T-cell (primary cell): ENCODE measurements at regions of chr1 and their contacts with region 1.

Region 1: GRCh38 chr1:184892116-184892515 is 82.2 kb downstream of the NIBAN1 start:
- DNase-seq: peak in 2 of 35 experiments; percentile 8 to 45
- ATAC-seq: peak; percentile 22 to 66 (median 46)
- H3K4me3 ChIP-seq: no peak overlapping the region
- H3K4me3 Mint-ChIP-seq: peak overlapping the region in 1 of 3 donors; percentile 10
- H3K27ac ChIP-seq: peak overlapping the region; percentile 87
- H3K27ac Mint-ChIP-seq: peak overlapping the region; percentile 78 to 79
- H3K4me1 ChIP-seq: peaks cover 0 to 17% of the 10 kb centered on the region in 2 experiments
- H3K4me1 Mint-ChIP-seq: peaks cover 10 to 61% (median 48%) of the 10 kb centered on the region in 3 donors
- H3K27me3 ChIP-seq: no peaks in the 10 kb centered on the region
- H3K27me3 Mint-ChIP-seq: no peaks in the 10 kb centered on the region

Region 2: DNA sequence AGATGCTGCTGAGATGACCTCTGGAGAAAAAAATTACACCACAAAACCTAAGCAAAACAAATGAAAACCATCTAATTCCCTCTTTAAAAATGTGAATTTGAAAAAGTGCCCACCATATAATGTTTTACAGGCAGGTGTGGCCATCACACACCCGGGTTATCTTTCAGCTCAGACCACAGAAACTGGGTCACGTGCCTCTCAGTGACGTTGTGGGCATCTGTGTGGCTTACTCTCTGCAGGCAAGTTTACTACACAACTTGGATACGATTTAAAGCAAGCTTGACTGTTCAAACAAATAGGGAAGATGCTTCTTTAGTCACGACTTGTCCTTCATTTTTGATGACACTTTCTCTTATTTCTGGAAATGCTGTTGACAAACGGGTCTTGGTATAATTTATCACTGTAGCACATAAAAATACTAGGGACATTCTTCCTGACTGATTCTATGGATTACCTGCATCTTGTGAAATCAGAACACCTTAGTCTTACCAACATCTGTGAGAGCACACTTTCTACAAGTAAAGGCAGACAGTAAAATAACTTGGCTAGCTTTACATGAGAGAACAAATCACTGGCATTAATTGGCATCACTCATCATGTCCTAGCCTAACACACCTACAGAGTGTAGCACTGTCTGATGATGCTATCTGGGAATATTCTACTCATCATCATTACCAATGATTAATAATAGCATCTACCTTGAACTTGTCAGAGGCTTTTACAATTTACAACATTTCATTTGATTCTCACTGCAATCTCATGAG is 48.2 kb before region 1 on chr1:
- CTCF ChIA-PET with region 1: interaction called in 1 of 2 experiments, 5 read pairs
- POLR2A ChIA-PET with region 1: interaction called in 1 of 2 experiments, 23 read pairs
- DNase-seq: peak; percentile 14 to 84 (median 61)
- ATAC-seq: peak; percentile 44 to 77 (median 68)
- H3K4me3 ChIP-seq: no peak overlapping the region
- H3K4me3 Mint-ChIP-seq: no peak overlapping the region
- H3K27ac ChIP-seq: peak overlapping the region; percentile 61
- H3K27ac Mint-ChIP-seq: peak overlapping the region; percentile 23 to 81
- H3K4me1 ChIP-seq: peaks cover 0 to 16% of the 10 kb centered on the region in 2 experiments
- H3K4me1 Mint-ChIP-seq: peaks cover 23 to 44% (median 43%) of the 10 kb centered on the region in 3 donors
- H3K27me3 ChIP-seq: no peaks in the 10 kb centered on the region
- H3K27me3 Mint-ChIP-seq: no peaks in the 10 kb centered on the region

Region 3: DNA sequence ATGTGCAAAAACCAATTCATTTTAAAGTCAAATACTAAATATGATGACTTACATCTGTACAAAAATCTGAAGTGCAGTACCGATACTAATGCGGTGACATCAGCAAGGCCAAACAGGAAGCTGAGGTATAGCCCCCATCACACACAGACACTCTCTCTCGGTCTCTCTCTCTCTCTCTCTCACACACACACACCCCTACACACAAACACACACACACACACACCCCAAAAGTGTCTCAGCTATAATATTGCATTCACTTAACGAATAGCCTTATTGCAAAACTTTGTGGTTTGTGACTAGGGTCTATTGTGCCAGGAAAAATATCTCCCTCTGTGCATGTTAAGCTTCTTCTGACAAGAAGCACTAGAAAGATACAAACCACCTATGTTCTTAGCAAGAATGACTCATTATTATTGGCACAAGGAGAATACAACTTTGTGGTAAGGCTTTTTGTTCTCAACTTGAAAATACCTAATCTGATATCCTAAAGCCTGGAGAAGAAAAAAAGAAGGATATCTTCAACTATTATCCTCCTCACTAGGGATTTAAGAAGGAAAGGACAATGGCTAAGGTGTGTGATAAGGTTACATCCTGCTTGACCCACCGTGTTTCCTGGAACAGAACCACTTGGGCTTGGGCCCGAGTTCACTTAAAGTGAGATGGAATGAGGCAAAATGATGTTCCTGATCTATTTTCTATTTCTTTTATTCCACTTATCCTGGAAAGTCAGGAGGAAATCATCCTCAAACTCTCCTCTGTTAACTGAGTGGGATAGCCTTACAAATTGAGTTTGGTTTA is 24.9 kb before region 1 on chr1:
- CTCF ChIA-PET with region 1: interaction called, 6 to 10 read pairs
- POLR2A ChIA-PET with region 1: interaction called in 1 of 2 experiments, 6 read pairs
- DNase-seq: peak; percentile 5 to 78 (median 45)
- ATAC-seq: peak; percentile 85 to 89 (median 88)
- H3K4me3 ChIP-seq: no peak overlapping the region
- H3K4me3 Mint-ChIP-seq: peak overlapping the region; percentile 21 to 65 (median 22)
- H3K27ac ChIP-seq: peak overlapping the region; percentile 86
- H3K27ac Mint-ChIP-seq: peak overlapping the region; percentile 86 to 91
- H3K4me1 ChIP-seq: peaks cover 0 to 9% of the 10 kb centered on the region in 2 experiments
- H3K4me1 Mint-ChIP-seq: peaks cover 26 to 50% (median 50%) of the 10 kb centered on the region in 3 donors
- H3K27me3 ChIP-seq: no peaks in the 10 kb centered on the region
- H3K27me3 Mint-ChIP-seq: no peaks in the 10 kb centered on the region

Region 4: GRCh38 chr1:184973272-184974055 is 81.3 kb after region 1 on chr1:
- CTCF ChIA-PET with region 1: interaction called in 1 of 2 experiments, 4 read pairs
- POLR2A ChIA-PET with region 1: interaction called in 1 of 2 experiments, 37 read pairs
- DNase-seq: peak in 31 of 35 experiments; percentile 1 to 82 (median 33)
- ATAC-seq: peak; percentile 13 to 75 (median 30)
- H3K4me3 ChIP-seq: peak overlapping the region; percentile 67 to 83
- H3K4me3 Mint-ChIP-seq: peak overlapping the region; percentile 90 to 94 (median 91)
- H3K27ac ChIP-seq: peak overlapping the region; percentile 90
- H3K27ac Mint-ChIP-seq: peak overlapping the region; percentile 91 to 92
- H3K4me1 ChIP-seq: peaks cover 7 to 33% of the 10 kb centered on the region in 2 experiments
- H3K4me1 Mint-ChIP-seq: peaks cover 25 to 64% (median 57%) of the 10 kb centered on the region in 3 donors
- H3K27me3 ChIP-seq: no peaks in the 10 kb centered on the region
- H3K27me3 Mint-ChIP-seq: peaks cover 7 to 17% of the 10 kb centered on the region in 2 donors

Region 5: DNA sequence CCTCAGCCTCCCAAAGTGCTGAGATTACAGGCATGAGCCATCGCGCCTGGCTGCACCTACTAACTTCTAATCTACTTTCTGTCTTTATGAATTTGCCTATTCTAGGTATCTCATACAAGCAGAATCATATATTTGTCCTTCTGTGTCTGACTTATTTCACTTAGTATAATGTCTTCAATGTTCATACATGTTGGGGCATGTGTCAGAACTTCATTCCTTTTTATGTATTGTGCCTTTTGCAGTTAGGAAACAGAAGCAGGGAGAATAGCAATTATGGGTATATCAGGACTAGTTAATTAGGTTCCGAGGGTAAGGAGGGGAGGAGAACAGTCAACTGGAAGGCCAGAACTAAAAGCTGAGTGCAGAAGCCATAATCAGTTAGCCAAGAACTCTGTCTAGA is 100.2 kb after region 1 on chr1:
- CTCF ChIA-PET with region 1: no interaction called
- POLR2A ChIA-PET with region 1: interaction called in 1 of 2 experiments, 15 read pairs
- DNase-seq: no peak
- ATAC-seq: no peak
- H3K4me3 ChIP-seq: no peak overlapping the region
- H3K4me3 Mint-ChIP-seq: no peak overlapping the region
- H3K27ac ChIP-seq: no peak overlapping the region
- H3K27ac Mint-ChIP-seq: no peak overlapping the region
- H3K4me1 ChIP-seq: no peaks in the 10 kb centered on the region
- H3K4me1 Mint-ChIP-seq: no peaks in the 10 kb centered on the region
- H3K27me3 ChIP-seq: peaks cover 0 to 5% of the 10 kb centered on the region in 2 experiments
- H3K27me3 Mint-ChIP-seq: peaks cover 12 to 23% of the 10 kb centered on the region in 2 donors